H1 (cell line): ENCODE measurements at regions of chr18 and their contacts with region 1.

Region 1: DNA sequence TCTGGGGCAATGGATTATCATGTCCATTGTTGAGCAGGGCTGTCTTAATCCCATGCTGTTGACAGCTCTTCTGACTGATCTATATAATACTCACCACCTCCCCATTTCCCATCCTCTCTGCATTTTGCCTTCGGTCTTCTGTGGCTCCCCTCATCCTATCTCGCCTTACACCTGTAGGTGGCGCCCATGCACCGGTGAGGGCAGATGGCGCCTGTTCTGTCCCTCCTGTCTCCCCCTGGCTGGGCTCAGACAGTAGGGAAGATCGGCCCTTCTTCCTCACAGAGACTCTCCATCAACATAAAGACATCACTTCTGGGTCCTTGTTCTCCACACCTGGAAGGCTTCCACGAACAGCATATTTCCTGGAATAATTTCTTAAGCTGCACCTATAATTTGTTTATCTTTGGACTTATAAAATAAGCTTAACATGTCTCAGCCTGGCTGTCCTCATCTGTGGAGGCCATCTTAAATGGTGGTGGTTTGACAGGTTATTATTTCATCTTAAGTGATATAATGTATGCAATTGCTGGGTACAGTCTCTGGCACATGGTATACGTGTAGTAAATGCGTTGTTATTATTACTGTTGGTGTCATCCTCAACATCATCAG is 10.9 kb upstream of the CDH20 start:
- DNase-seq: peak in 1 of 2 experiments; percentile 92
- H3K4me3 ChIP-seq: no peak overlapping the region
- H3K27ac ChIP-seq: no peak overlapping the region
- H3K4me1 ChIP-seq: no peaks in the 10 kb centered on the region
- H3K27me3 ChIP-seq: no peaks in the 10 kb centered on the region
- CTCF ChIP-seq: peak; percentile 96 to 98 (median 96)
- EP300 ChIP-seq: no peak
- POLR2A ChIP-seq: no peak
- RAD21 ChIP-seq: peak; percentile 98 to 99

Region 2: GRCh38 chr18:61286867-61287266 is 35.5 kb before region 1 on chr18:
- CTCF ChIA-PET with region 1: interaction called, 10 read pairs
- POLR2A ChIA-PET with region 1: no interaction called
- DNase-seq: no peak
- H3K4me3 ChIP-seq: no peak overlapping the region
- H3K27ac ChIP-seq: no peak overlapping the region
- H3K4me1 ChIP-seq: peaks cover 0 to 5% (median 0%) of the 10 kb centered on the region in 4 experiments; a peak in 1 of 7 replicates
- H3K27me3 ChIP-seq: no peaks in the 10 kb centered on the region
- CTCF ChIP-seq: no peak
- EP300 ChIP-seq: no peak
- POLR2A ChIP-seq: no peak
- RAD21 ChIP-seq: no peak

Region 3: DNA sequence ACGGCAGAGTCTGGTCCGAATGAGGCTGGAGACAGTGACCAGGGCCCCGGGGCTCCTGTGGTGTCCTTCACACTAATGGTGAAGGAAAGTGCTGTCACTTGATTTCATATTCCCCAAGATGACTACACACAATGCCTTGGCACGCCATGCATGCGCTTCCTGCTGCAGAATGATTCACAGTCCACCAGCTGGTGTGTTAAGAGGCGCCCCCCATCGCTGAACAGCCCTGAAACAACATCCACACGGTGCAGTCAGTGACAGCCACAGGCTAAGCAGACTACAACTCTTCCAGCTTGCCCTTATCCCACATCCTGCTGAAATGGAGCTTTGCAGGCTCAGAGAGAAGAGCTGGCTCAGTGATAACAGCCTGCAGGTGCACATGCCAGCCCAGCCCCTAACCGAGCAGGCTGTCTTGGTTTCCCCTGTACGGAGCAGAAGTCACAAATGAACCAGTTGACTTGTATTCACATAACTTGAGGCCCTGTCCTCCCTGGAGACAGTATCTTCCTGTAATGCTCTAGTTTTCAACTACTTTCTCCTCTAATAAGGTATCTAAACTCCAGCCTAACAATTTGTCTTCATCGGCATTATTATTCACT is 13.5 kb before region 1 on chr18:
- CTCF ChIA-PET with region 1: interaction called, 14 read pairs
- POLR2A ChIA-PET with region 1: no interaction called
- DNase-seq: no peak
- H3K4me3 ChIP-seq: no peak overlapping the region
- H3K27ac ChIP-seq: no peak overlapping the region
- H3K4me1 ChIP-seq: no peaks in the 10 kb centered on the region
- H3K27me3 ChIP-seq: no peaks in the 10 kb centered on the region
- CTCF ChIP-seq: no peak
- EP300 ChIP-seq: no peak
- POLR2A ChIP-seq: no peak
- RAD21 ChIP-seq: no peak

Region 4: DNA sequence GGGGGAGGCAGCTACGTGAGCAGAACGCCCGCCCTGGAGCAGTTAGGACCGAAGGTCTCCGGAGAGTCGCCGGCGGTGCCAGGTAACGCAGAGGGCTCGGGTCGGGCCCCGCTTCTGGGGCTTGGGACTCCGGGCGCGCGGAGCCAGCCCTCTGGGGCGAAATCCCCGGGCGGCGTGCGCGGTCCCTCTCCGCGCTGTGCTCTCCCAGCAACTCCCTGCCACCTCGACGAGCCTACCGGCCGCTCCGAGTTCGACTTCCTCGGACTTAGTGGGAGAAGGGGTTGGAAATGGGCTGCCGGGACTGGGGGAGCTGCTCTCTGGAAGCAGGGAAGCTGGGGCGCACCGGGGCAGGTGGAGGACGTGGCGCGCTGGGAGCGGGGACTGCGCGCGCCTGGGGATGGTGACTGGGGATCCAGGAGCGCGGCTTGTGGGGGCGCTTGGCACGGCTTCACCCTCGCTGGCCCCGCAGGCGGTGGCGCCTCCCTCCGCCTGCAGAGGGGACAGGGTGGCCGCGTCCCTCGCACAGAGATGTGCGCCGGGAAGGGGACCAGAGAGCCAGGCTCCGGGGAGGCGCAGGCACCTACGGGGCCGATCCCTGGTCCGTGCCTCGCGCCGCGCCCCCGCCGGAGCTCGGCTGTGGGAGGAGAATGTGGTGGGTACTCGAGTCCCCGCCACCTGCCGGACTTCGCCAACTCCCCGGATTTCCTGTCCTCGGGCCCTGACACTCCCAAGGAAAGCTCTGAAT is 11.5 kb after region 1 on chr18:
- CTCF ChIA-PET with region 1: interaction called, 36 read pairs
- POLR2A ChIA-PET with region 1: no interaction called
- DNase-seq: peak in 1 of 2 experiments; percentile 79
- H3K4me3 ChIP-seq: peak overlapping the region; percentile 50 to 73 (median 65)
- H3K27ac ChIP-seq: no peak overlapping the region
- H3K4me1 ChIP-seq: no peaks in the 10 kb centered on the region; a peak in 1 of 7 replicates
- H3K27me3 ChIP-seq: peaks cover 0 to 25% (median 15%) of the 10 kb centered on the region in 4 experiments; a peak in 6 of 7 replicates
- CTCF ChIP-seq: no peak
- EP300 ChIP-seq: no peak
- POLR2A ChIP-seq: no peak
- RAD21 ChIP-seq: no peak; a peak in 1 of 4 replicates

Region 5: DNA sequence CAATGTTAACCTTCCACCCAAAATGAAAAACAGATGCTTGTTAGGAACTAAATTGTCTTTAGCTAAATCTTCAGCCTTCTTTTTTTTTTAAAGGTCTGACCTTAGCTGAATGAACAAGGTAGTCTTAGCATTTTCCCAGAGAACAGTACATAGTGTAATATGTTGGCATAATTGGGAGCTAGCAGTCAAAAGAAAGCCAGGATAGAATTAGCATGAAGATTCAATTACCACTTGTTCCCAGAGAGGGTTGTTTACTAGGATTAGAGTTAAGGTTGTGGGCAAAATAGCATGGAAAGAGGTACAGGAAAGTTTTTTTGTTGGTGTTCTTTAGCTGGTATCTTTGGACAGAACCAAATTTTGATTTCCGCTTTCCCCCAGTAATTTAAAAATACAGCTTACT is 17.8 kb after region 1 on chr18:
- CTCF ChIA-PET with region 1: interaction called, 36 read pairs
- POLR2A ChIA-PET with region 1: no interaction called
- DNase-seq: no peak
- H3K4me3 ChIP-seq: no peak overlapping the region
- H3K27ac ChIP-seq: no peak overlapping the region
- H3K4me1 ChIP-seq: no peaks in the 10 kb centered on the region
- H3K27me3 ChIP-seq: peaks cover 0 to 4% (median 4%) of the 10 kb centered on the region in 4 experiments; a peak in 5 of 7 replicates
- CTCF ChIP-seq: no peak
- EP300 ChIP-seq: no peak
- POLR2A ChIP-seq: no peak
- RAD21 ChIP-seq: no peak

Region 6: DNA sequence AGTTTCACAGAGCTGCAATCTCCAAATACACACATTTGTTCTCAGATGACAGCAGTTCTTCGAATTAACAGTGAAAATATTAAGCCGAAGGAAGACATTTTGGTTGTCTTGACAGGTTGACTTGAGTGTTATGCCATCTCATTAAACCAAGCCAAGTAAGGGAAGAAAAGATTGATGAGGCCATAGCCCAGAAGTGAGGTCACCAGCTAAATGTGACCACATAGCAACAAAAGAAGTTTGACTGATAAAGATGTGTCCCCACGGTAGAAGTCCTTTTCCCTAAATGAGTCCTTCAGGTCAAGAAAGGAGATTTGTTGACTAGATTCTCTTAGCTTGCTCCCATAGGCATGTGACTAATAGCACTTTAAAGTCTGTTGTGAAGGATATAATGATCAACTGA is 167.0 kb after region 1 on chr18:
- CTCF ChIA-PET with region 1: interaction called, 266 read pairs
- POLR2A ChIA-PET with region 1: no interaction called
- DNase-seq: no peak
- H3K4me3 ChIP-seq: no peak overlapping the region
- H3K27ac ChIP-seq: no peak overlapping the region
- H3K4me1 ChIP-seq: peaks cover 0 to 5% (median 0%) of the 10 kb centered on the region in 4 experiments; a peak in 1 of 7 replicates
- H3K27me3 ChIP-seq: no peaks in the 10 kb centered on the region
- CTCF ChIP-seq: no peak
- EP300 ChIP-seq: no peak
- POLR2A ChIP-seq: no peak
- RAD21 ChIP-seq: no peak

Region 7: GRCh38 chr18:61502472-61502871 is 180.1 kb after region 1 on chr18:
- CTCF ChIA-PET with region 1: interaction called, 266 read pairs
- POLR2A ChIA-PET with region 1: interaction called, 4 read pairs
- DNase-seq: peak in 1 of 2 experiments; percentile 64
- H3K4me3 ChIP-seq: no peak overlapping the region
- H3K27ac ChIP-seq: no peak overlapping the region
- H3K4me1 ChIP-seq: peaks cover 0 to 2% (median under 1%) of the 10 kb centered on the region in 4 experiments; a peak in 2 of 7 replicates
- H3K27me3 ChIP-seq: no peaks in the 10 kb centered on the region; a peak in 1 of 7 replicates
- CTCF ChIP-seq: peak in 2 of 3 experiments; percentile 75 to 84; a peak in 3 of 4 replicates
- EP300 ChIP-seq: no peak
- POLR2A ChIP-seq: no peak
- RAD21 ChIP-seq: peak; percentile 92 to 93

Region 8: DNA sequence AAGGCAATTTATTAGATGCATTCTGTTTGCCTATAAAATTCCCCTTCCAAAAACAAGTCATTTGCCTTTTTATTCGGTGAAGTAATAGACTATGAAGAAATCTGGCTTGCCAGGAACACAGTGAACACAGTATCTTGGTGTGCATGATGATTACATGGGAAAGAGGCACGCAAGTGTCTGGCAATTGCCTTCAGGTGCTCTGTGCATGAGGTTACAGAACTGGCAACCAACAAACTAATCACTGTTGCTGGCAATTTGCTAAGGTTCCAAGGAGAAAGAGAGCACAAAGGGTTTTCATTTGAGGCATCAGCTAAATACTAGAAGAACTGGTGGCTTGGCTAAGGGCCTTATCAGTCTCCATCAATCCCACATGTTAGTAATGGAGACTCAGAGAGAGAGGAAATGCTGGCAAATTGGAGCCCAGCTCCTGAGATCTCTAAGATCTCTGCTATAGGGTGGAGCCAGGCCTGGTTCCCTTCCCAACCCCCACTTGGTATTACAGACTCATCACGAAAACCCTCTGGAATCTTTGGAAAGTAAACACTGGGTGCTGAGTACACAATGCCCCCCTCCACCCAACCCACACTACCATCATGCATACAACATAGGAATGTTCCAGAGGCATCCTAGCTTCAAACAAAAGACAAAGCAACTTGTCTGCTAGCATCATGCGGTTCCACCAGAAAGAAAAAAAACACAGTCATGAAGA is 560.1 kb after region 1 on chr18:
- CTCF ChIA-PET with region 1: no interaction called
- POLR2A ChIA-PET with region 1: no interaction called
- DNase-seq: no peak
- H3K4me3 ChIP-seq: no peak overlapping the region
- H3K27ac ChIP-seq: no peak overlapping the region
- H3K4me1 ChIP-seq: peaks cover 0 to 5% (median 0%) of the 10 kb centered on the region in 4 experiments; a peak in 1 of 7 replicates
- H3K27me3 ChIP-seq: no peaks in the 10 kb centered on the region
- CTCF ChIP-seq: no peak
- EP300 ChIP-seq: no peak
- POLR2A ChIP-seq: no peak
- RAD21 ChIP-seq: no peak